Left ventricle myocardium superior (tissue), 1 donor: ENCODE measurements at regions of chr3 and their contacts with region 1.

Region 1: DNA sequence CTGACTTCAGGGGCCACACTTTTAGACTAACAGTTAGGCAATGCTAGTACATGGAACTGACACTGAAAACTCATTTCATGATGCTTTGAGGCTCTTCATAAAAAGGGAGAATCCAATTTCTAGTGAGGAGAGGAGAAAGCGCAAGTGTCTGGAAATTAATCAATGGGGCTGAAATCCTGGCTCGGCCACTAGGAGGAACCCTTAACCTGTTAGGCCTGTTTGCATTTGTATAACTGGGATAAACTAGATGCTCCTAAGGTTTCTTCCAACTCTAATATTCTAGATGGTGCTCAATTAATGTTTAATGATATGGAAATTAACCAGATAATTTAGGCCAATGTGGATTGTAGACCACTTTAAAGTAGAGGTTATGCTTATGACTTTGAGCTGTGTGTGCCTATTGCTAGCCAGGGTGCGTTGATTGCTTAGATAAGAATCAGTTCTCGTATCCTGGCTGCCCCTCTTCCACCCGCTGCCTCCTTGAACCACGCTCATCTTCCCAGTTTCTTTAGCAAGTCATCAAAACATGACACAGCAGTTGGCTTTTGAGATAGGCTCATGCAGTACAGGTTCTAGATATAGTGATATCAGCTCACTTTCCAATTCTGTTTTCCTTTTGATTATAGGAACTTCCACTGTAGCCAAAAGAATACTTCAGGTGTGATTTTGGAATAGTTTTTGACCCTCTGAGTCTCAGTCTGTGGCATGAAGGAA is 16.8 kb upstream of the CRBN start:
- DNase-seq: no peak
- ATAC-seq: no peak

Region 2: DNA sequence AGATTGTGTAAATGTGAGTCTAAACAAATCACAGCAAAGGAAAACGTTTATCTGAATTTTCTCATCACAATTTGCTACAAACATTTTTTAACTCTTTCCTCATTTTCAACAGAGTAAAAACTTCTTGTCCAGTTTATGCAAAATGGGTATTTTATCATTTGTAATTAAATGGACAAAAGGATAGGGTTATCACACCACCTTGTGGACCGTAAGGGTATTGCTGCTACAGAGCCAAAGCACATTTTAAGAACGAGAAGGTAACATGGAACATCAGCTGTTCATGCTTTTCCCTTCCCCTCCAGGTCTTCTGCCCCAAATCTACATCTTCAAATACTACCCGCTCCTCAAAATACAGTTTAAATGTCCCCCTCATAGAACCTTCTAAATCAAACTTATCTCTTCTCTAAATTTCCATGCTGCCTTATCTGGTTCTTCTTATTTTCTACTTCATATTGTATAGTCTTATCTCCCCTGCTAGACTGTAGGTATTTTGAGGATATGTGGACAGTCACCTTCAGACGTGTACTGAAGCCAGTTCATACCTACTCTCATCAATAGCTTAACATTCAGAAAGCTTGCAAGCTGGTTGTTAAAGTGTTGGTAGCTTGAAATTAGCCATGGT is 1094.1 kb after region 1 on chr3:
- intact Hi-C with region 1: loop called (anchors 5 kb)
- DNase-seq: no peak
- ATAC-seq: peak; percentile 32